ENCODE measurements at regions of chr21 and their contacts with region 1.

Region 1: DNA sequence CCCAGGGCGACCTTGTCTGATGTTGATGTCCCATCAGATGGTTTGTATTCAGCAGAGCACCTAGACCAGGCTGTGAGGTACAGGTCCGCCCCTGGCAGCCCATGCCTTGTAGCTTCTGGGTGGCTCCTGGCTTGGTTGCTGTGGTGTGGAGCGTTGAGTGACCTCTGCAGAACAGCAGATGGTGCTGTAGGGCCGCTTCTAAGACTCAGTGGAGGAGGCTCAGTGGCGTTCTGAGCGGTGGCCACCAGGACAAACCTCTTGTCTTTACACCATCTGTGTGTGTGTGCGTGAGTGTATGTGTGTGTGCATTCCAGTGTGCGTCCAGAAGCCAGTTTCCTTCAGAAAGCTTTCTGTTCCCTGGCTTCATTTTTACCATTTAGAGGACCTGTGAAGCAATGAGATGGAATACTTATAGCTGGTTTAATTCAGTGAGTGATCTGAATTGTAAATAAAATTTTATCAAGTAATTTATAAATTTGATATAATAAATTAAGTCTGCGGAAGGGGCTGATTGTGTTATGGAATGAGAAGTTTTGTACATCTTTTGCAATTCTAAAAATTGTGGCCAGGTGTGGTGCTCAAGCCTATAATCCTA is 66.1 kb downstream of the ADARB1 start:
- DNase-seq: peak; percentile 88
- H3K4me3 ChIP-seq: no peak overlapping the region
- H3K27ac ChIP-seq: no peak overlapping the region
- H3K4me1 ChIP-seq: no peaks in the 10 kb centered on the region
- H3K27me3 ChIP-seq: no peaks in the 10 kb centered on the region
- CTCF ChIP-seq: peak; percentile 90 to 93
- POLR2A ChIP-seq: no peak

Region 2: DNA sequence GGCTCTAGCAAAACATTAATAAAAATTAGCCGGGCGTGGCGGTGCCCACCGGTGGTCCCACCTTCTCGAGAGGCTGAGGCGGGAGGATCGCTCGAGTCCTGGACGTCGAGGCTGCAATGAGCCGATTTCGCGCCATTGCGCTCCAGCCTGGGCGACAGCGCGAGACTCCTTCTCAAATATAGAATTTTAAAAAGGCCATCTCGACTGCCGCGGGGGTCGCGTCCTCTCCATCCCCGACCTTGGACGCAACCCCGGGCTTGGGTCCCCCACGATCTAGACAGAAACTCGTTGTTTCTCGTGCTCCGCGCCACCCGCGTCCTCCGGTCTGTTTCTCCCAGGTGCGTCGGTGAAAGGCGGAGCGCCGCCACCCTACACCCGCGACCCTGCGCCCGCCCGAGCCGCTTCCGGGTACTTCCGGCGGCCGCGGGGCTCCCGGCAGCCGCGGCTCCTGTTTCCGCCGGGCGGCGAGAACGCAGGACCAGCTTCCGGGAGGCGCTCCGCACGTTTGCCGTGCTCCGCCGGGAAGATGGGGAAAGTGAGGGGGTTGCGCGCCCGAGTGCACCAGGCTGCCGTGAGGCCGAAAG is 200.8 kb before region 1 on chr21 and contains the start of gene SLX9:
- CTCF ChIA-PET with region 1: interaction called, 330 read pairs
- POLR2A ChIA-PET with region 1: no interaction called
- dilution Hi-C with region 1: loop called (anchors 25 kb)
- intact Hi-C with region 1: no loop called
- DNase-seq: peak; percentile 39
- H3K4me3 ChIP-seq: peak within 1 kb of the TSS; percentile 48 to 83 (median 60)
- H3K27ac ChIP-seq: peak within 1 kb of the TSS; percentile 47
- H3K4me1 ChIP-seq: peaks cover 18% of the 10 kb centered on the region
- H3K27me3 ChIP-seq: no peaks in the 10 kb centered on the region
- CTCF ChIP-seq: no peak
- POLR2A ChIP-seq: peak; percentile 81
- total RNA-seq, gene SLX9: 46.4 and 50.6 TPM in 2 replicates

Region 3: DNA sequence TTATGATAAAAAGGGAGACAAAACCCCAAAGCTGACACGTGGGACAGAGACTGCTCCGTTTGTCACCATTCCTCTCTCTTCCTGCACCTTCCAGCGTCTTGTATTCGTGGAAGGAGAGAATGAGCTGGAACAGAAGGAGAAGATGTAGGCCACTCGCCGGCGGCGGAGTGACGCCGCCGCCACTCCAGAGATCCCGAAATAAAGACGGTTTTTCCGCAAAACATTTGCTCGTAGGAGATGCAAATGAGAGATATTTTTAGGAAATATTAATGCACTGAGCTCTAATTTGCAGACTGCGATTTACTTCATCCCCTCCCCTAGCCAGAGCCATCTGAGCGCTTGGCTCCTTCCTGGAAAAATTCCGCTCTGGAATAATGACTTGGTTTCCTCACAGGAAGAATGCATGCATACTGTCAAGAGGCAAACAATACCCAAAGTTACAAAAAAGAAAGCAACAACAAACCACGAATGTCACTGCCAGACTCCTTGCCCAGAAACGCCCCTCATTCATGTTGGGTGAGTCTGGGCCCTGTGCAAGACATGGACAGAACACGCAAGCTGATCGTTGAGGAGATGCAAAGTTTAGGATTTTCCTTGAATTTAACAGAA is 84.0 kb before region 1 on chr21:
- CTCF ChIA-PET with region 1: no interaction called
- POLR2A ChIA-PET with region 1: no interaction called
- dilution Hi-C with region 1: no loop called
- intact Hi-C with region 1: no loop called
- DNase-seq: peak; percentile 82
- H3K4me3 ChIP-seq: no peak overlapping the region
- H3K27ac ChIP-seq: peak overlapping the region; percentile 68
- H3K4me1 ChIP-seq: peaks cover 17% of the 10 kb centered on the region
- H3K27me3 ChIP-seq: no peaks in the 10 kb centered on the region
- CTCF ChIP-seq: no peak
- POLR2A ChIP-seq: no peak

Region 4: DNA sequence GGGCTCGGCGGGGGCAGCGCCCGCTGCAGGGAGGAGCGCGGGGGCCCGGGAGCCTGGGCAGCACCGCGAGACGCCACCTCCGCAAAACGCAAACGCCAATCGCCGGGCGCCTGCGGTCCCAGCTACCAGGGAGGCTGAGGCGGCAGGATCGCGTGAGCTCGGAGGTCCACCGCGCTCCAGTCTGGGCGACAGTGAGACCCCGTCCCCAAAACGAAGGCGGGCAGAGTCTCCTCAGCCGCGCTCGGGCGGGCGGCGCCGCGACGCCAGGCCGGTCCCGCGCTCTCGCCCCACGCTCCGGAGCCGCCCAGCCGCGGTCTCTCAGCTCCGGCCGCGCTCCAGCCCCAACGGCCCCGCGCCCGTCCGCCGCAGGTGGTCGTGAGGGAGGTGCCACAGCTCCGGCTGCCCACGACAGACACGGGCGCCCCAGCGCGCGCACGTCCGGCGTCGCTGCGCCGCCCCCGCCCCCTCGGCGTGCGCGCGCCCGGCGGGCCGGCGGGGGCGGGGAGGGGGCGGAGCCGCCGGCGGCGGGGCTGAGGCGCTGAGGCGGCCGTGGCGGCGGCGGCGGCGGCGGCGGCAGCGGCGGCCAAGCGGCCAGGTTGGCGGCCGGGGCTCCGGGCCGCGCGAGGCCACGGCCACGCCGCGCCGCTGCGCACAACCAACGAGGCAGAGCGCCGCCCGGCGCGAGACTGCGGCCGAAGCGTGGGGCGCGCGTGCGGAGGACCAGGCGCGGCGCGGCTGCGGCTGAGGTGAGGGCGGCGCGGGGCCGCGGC is 66.2 kb before region 1 on chr21 and contains the start of gene ADARB1:
- CTCF ChIA-PET with region 1: interaction called, 62 read pairs
- POLR2A ChIA-PET with region 1: no interaction called
- dilution Hi-C with region 1: no loop called
- intact Hi-C with region 1: no loop called
- DNase-seq: peak; percentile 29
- H3K4me3 ChIP-seq: peak within 1 kb of the TSS; percentile 68 to 81 (median 73)
- H3K27ac ChIP-seq: peak within 1 kb of the TSS; percentile 75
- H3K4me1 ChIP-seq: peaks cover 16% of the 10 kb centered on the region
- H3K27me3 ChIP-seq: no peaks in the 10 kb centered on the region
- CTCF ChIP-seq: no peak
- POLR2A ChIP-seq: peak; percentile 79
- total RNA-seq, gene ADARB1: 54.3 and 55.5 TPM in 2 replicates

Region 5: DNA sequence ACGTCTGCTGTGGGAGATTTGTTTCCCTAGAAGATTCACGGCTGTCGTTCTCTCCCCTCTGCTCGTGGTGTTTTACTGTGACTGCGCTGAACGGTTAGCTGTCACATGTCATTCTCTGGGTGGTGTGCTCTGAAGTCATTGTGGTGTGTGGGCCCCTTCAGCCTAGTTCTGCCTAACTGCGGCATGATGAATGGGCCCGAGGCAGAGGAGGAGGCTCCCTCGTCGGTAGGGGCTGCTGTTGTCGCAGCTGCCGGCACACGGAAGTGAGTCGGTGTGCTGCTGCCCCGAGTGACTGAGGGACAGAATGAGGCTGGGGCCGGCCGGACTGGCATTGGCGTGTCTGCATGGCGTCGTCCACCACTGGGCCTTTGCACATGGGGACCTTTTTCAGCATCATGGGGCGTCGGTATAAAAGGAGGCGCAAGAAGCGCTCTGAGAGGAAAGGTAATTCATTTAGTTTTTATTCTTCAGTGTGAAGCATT is 11.9 kb after region 1 on chr21:
- CTCF ChIA-PET with region 1: interaction called, 12 read pairs
- POLR2A ChIA-PET with region 1: no interaction called
- dilution Hi-C with region 1: no loop called
- intact Hi-C with region 1: no loop called
- DNase-seq: no peak
- H3K4me3 ChIP-seq: no peak overlapping the region
- H3K27ac ChIP-seq: no peak overlapping the region
- H3K4me1 ChIP-seq: no peaks in the 10 kb centered on the region
- H3K27me3 ChIP-seq: no peaks in the 10 kb centered on the region
- CTCF ChIP-seq: peak in 1 of 2 donors; percentile 16
- POLR2A ChIP-seq: no peak

Region 6: GRCh38 chr21:45309069-45309986 is 168.9 kb after region 1 on chr21:
- CTCF ChIA-PET with region 1: interaction called, 15 read pairs
- POLR2A ChIA-PET with region 1: no interaction called
- dilution Hi-C with region 1: no loop called
- intact Hi-C with region 1: no loop called
- DNase-seq: peak; percentile 89
- H3K4me3 ChIP-seq: no peak overlapping the region
- H3K27ac ChIP-seq: peak overlapping the region; percentile 84
- H3K4me1 ChIP-seq: peaks cover 18% of the 10 kb centered on the region
- H3K27me3 ChIP-seq: no peaks in the 10 kb centered on the region
- CTCF ChIP-seq: peak; percentile 76 to 93
- POLR2A ChIP-seq: no peak

Region 7: DNA sequence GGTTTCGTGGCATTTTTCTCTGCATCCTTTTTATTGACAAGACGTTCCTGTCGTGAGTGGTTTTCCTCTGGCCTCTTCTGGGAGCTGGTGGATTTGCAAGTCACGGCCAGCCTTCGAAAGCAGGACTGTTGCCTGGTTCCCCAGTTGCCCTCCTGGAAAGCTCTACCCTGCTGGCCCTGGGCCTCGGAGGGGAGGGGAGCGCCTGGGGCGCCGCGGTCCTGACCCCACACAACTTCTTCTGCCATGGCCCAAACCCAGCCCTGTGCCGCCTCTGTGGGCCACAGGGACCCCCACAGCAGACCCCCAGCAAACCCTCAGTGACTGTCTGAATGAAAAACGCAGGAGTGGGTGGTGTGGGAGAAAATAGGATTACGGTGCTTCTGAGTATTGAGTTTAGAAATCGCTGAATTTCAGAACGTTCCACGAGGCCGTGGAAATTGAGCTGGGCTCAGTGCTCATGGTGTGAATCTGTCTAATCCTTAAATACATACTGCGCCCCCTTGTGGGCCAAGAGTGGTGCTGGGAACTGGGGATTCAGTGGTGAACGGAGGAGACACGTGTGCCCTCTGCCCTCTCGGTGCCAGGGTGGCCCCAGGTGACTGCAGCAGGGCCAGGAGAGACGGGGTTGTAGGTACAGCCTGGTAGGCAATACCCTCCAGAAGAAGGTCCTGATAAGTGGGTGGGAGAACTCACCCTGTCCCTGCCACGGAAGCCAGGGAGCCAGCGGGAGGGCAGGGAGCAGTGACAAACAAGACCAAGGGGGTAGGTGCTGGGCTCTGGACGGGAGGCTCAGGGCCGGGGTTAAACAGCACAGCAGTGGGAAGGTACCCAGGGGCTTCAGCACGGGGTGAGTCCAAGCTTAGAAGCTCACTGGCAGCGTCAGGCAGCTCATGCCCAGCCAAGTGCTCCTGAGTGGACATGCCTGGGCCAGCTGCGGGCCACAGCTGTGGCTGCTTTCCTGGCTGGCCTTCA is 739.9 kb after region 1 on chr21:
- CTCF ChIA-PET with region 1: interaction called, 13 read pairs
- POLR2A ChIA-PET with region 1: no interaction called
- dilution Hi-C with region 1: no loop called
- intact Hi-C with region 1: no loop called
- DNase-seq: peak; percentile 44
- H3K4me3 ChIP-seq: no peak overlapping the region
- H3K27ac ChIP-seq: no peak overlapping the region
- H3K4me1 ChIP-seq: no peaks in the 10 kb centered on the region
- H3K27me3 ChIP-seq: no peaks in the 10 kb centered on the region
- CTCF ChIP-seq: peak; percentile 70 to 72
- POLR2A ChIP-seq: no peak